ENCODE measurements at regions of chr2 and their contacts with region 1.

Region 1: DNA sequence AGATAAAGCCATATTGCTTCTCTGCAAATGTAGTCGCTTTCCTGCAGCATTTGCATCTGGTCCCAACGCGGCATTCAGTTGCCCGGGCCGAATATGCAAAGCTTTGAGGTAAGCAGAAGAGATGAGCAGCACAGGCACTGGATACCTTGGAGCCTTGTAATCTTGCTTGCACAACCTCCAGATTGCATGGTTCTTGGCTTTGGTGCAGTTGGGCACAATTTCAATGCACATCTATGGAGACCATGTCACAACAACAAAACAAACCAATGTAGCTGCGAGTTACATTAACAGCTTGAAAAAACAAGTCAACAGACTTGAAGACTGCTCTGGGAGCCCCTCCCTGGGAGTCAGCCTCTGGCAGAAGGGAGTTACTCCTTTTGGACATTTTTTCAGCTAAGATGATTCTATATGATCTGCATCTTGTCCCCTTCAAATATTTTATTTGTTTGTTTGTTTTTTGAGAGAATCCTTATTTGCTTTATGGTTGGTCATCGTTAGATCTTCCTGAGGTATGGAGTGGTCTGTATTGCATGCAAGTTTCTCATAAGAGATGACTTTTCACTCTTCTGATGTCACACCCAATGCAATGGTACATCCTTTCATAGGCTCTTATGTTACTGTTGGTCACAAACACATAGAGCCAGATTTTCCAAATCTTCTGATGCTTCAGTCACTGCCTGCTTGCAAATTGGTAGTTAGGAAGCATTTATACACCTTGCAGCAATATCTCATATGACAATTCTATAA is 113.5 kb downstream of the EFEMP1 start:
- DNase-seq: peak; percentile 19
- ATAC-seq: no peak
- H3K4me3 ChIP-seq: no peak overlapping the region
- H3K27ac ChIP-seq: no peak overlapping the region
- H3K4me1 ChIP-seq: peaks cover 5% of the 10 kb centered on the region
- H3K27me3 ChIP-seq: no peaks in the 10 kb centered on the region; the same call in 1 of the 2 replicates
- CTCF ChIP-seq: no peak
- POLR2A ChIP-seq: no peak
- RAD21 ChIP-seq: no peak

Region 2: DNA sequence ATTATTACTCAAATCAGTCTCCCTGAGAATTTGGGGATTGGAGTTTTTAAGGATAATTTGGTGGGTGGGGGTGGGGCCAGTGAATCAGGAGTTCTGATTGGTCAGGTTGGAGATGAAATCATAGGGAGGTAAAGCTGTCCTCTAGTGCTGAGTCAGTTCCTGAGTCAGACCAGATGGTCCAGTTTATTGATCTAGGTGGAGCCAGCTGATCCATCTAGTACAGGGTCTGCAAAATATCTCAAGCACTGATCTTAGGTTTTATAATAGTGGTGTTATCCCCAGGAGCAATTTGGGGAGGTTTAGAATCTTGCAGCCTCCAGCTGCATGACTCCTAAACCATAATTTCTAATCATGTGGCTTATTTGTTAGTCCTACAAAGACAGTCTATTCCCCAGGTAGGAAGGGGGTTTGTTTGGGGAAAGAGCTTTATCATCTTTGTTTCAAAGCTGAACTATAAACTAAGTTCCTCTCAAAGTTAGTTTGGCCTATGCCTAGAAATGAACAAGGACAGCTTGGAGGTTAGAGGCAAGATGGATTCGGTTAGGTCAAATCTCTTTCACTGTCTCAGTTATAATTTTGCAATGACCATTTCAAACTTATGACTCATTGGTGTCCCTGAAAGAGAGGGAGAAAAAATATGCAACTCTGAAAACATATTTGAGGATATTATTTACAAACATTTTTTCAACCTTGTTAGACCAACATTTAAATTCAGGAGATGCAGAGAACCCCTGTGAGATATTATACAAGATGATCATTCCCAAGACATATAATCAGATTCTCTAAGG is 17.6 kb after region 1 on chr2:
- CTCF ChIA-PET with region 1: no interaction called
- POLR2A ChIA-PET with region 1: interaction called, 13 read pairs
- dilution Hi-C with region 1: no loop called
- in situ Hi-C with region 1: no loop called
- intact Hi-C with region 1: no loop called
- DNase-seq: peak; percentile 62
- ATAC-seq: peak; percentile 54; the same call in 1 of the 2 replicates
- H3K4me3 ChIP-seq: no peak overlapping the region
- H3K27ac ChIP-seq: no peak overlapping the region
- H3K4me1 ChIP-seq: peaks cover 5% of the 10 kb centered on the region; the same call in 1 of the 2 replicates
- H3K27me3 ChIP-seq: no peaks in the 10 kb centered on the region
- CTCF ChIP-seq: no peak
- POLR2A ChIP-seq: no peak
- RAD21 ChIP-seq: no peak

Region 3: GRCh38 chr2:56155188-56155587 is 345.1 kb after region 1 on chr2:
- CTCF ChIA-PET with region 1: no interaction called
- POLR2A ChIA-PET with region 1: no interaction called
- dilution Hi-C with region 1: no loop called
- in situ Hi-C with region 1: no loop called
- intact Hi-C with region 1: no loop called
- DNase-seq: no peak
- ATAC-seq: no peak
- H3K4me3 ChIP-seq: no peak overlapping the region
- H3K27ac ChIP-seq: no peak overlapping the region
- H3K4me1 ChIP-seq: no peaks in the 10 kb centered on the region
- H3K27me3 ChIP-seq: no peaks in the 10 kb centered on the region
- CTCF ChIP-seq: no peak
- POLR2A ChIP-seq: no peak
- RAD21 ChIP-seq: no peak